Natural killer cell (primary cell): ENCODE measurements at regions of chr13 and their contacts with region 1.

Region 1: DNA sequence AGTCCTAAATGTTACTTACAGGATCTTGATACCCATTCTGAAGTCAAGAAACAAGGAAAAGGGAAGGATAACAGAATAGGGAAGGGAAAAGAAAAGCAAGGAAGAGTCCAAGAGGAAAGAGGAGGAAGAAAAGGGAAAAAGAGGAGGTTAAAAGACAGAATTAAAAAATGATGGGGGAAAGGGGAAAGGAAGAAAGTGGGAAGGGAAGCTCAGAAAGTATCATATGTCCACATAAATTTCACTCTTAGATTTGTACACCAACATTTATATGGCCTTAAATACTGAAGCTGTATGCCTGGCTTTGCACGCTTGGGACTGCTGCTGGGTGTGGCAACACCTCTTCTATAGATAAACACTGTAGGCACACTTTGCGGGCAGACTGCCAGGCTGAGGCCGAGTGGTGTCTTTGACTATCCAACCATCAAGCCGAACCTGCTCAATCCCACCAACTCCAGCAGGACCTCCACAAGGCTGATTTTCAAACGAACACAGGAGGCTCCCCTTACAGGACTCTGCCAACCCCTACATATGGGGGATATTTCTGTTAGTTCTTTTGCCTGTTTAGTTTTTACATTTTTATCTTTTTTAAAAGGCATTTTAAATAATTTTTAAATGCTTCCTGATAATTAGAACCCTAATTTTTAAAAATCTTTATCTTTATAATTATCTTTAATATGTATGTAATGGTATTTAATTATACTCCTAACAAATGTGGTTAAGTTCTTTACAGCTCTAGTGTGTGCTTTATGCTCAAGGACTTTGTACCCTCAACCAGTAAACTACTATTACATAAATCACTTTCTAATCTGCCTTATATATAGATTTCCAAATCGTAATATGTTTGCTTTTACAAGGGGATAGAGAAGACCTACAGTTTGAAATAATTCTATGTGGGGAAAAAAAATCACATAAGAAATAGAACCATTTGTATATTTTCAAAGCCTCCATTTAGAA is 154.2 kb downstream of the DIAPH3 start:
- DNase-seq: peak in 1 of 2 donors; percentile 17
- ATAC-seq: peak in 2 of 3 donors; percentile 64 to 69
- H3K4me3 ChIP-seq: no peak overlapping the region
- H3K4me3 Mint-ChIP-seq: peak overlapping the region; percentile 33
- H3K27ac ChIP-seq: no peak overlapping the region
- H3K27ac Mint-ChIP-seq: peak overlapping the region in 1 of 2 donors; percentile 1
- H3K4me1 ChIP-seq: no peaks in the 10 kb centered on the region
- H3K4me1 Mint-ChIP-seq: peaks cover 6 to 14% of the 10 kb centered on the region in 2 donors
- H3K27me3 ChIP-seq: no peaks in the 10 kb centered on the region
- H3K27me3 Mint-ChIP-seq: no peaks in the 10 kb centered on the region
- CTCF ChIP-seq: no peak

Region 2: DNA sequence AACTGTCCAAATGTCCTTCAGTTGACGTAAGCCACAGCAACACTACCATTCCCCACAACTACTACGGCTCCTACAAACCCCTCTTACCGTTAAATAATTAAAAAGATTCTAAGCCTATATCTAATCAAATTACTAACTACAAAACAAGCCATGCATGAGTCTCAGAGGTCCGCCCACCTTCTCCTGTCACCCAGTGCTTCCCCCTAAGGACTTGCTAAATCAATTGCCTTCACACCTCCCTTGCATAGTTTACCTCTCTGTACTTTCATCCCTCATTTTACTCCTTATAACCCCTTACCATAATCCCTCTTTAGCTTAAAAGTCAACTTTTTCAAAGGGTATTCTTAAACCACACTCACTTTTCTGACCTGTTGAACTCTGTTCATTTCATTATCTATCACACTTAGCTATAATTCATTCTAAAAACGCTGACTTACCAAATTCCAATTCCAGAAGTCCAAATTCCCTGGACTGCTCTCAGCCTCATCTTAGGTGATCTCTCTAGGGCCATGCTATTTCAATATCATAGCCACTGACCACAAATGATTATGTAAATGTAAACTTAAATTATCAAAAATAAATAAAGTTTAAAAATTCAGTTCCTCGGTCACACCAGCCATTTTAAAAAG is 33.7 kb before region 1 on chr13:
- intact Hi-C with region 1: loop called (anchors 2 kb)
- DNase-seq: no peak
- ATAC-seq: no peak
- H3K4me3 ChIP-seq: no peak overlapping the region
- H3K4me3 Mint-ChIP-seq: no peak overlapping the region
- H3K27ac ChIP-seq: no peak overlapping the region
- H3K27ac Mint-ChIP-seq: no peak overlapping the region
- H3K4me1 ChIP-seq: no peaks in the 10 kb centered on the region
- H3K4me1 Mint-ChIP-seq: peaks cover 0 to 5% of the 10 kb centered on the region in 2 donors
- H3K27me3 ChIP-seq: no peaks in the 10 kb centered on the region
- H3K27me3 Mint-ChIP-seq: no peaks in the 10 kb centered on the region
- CTCF ChIP-seq: no peak

Region 3: DNA sequence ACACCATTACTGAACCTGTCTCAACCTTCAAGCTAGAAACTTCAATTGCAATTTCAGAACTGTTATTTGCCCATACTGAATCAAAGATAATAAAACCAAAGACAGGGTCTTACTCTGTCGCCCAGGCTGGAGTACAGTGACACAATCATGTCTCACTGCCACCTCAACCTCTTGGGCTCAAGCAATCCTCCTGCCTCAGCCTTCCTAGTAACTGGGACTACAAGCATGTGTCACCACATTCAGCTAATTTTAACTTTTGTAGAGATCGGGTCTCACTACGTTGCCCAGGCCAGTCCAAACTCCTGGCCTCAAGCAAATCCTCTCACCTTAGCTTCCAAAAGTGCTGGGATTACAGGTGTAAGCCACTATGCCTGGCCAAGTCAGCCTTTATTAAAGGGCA is 10.7 kb after region 1 on chr13:
- intact Hi-C with region 1: no loop called
- DNase-seq: no peak
- ATAC-seq: no peak
- H3K4me3 ChIP-seq: no peak overlapping the region
- H3K4me3 Mint-ChIP-seq: peak overlapping the region; percentile 32
- H3K27ac ChIP-seq: no peak overlapping the region
- H3K27ac Mint-ChIP-seq: peak overlapping the region; percentile 45 to 75
- H3K4me1 ChIP-seq: no peaks in the 10 kb centered on the region
- H3K4me1 Mint-ChIP-seq: peaks cover 31 to 32% of the 10 kb centered on the region in 2 donors
- H3K27me3 ChIP-seq: no peaks in the 10 kb centered on the region
- H3K27me3 Mint-ChIP-seq: no peaks in the 10 kb centered on the region
- CTCF ChIP-seq: no peak

Region 4: DNA sequence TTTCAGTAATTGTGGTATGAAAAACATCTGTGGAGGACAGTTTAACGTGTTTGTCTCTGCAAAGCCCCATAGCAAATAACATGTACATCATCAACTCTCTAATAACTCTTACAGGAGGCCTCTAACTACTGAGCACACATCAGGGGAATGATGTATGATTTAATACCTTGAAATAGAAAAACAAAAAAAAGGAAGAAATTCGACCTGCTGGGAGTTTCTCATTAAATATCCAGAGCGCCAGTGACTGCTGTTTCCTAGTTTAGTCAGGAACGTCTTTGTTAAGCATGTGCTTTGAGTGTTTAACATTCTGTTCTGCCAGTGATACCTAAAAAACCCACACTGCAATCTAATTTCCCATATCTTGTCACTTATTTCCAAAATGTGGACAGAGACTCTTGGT is 1170.7 kb after region 1 on chr13:
- intact Hi-C with region 1: no loop called
- DNase-seq: no peak
- ATAC-seq: no peak
- H3K4me3 ChIP-seq: no peak overlapping the region
- H3K4me3 Mint-ChIP-seq: no peak overlapping the region
- H3K27ac ChIP-seq: no peak overlapping the region
- H3K27ac Mint-ChIP-seq: no peak overlapping the region
- H3K4me1 ChIP-seq: no peaks in the 10 kb centered on the region
- H3K4me1 Mint-ChIP-seq: no peaks in the 10 kb centered on the region
- H3K27me3 ChIP-seq: no peaks in the 10 kb centered on the region
- H3K27me3 Mint-ChIP-seq: no peaks in the 10 kb centered on the region
- CTCF ChIP-seq: no peak